Dorsolateral prefrontal cortex (tissue), 120 donors: ENCODE measurements at regions of chr1 and their contacts with region 1.

Region 1: DNA sequence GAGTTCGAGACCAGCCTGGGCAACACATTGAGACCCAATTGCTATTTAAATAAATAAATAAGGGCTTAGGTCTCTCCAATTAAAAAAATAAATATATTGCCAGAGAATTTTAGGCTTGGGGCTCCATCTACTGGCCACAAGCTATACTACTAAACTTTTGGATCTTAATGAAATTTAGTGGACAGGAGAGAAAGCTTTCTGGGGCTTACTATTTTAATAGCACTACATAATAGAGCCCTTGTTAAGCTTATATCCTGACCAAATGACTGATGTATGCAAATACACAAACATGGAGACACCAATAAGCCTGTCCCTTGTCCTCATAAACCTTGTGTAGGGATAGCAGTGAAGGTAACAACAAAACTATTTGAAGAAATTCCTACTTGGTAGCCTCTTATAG is 18.4 kb downstream of the CCT3 start:
- DNase-seq: no peak
- H3K4me3 ChIP-seq: no peak overlapping the region
- H3K27ac ChIP-seq: no peak overlapping the region
- H3K27me3 ChIP-seq: no peaks in the 10 kb centered on the region
- CTCF ChIP-seq: peak; percentile 30 to 72 (median 58)

Region 2: DNA sequence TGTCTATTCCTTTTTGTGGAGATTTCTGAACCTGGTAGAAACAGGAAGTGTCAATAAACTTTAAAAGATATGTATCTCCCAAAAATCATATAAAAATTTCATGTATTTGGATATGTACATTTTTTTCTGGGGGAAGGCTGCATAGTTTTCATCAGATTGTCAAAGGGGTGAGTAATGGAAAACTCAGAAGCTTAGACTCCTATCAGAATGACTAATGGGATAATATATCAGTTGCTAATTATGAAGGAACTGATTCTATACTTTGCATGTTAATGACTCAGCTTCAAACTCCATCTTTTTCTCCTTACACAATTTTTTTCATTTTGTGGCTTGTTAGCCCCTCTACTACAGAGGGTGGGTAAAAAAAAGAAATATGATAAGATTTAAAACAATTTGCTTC is 518.5 kb before region 1 on chr1:
- intact Hi-C with region 1: no loop called
- DNase-seq: no peak
- H3K4me3 ChIP-seq: no peak overlapping the region
- H3K27ac ChIP-seq: no peak overlapping the region
- H3K27me3 ChIP-seq: no peaks in the 10 kb centered on the region
- CTCF ChIP-seq: no peak

Region 3: DNA sequence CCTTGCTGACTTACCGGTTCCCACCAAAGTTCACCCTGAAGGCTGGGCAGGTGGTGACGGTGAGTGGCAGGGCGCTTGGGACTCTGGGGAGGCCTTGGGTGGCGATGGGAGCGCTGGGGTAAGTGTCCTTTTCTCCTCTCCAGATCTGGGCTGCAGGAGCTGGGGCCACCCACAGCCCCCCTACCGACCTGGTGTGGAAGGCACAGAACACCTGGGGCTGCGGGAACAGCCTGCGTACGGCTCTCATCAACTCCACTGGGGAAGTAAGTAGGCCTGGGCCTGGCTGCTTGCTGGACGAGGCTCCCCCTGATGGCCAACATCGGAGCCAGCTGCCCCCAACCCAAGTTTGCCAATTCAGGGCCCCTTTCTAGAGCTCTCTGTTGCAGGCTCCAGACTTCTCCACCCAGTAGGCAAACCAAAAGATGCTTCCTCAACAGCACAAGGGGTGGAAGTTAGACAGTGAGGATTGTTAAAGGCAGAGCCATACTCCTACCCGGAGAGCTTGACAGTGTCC is 182.6 kb before region 1 on chr1:
- intact Hi-C with region 1: loop called (anchors 5 to 10 kb)
- DNase-seq: no peak
- H3K4me3 ChIP-seq: no peak overlapping the region
- H3K27ac ChIP-seq: no peak overlapping the region
- H3K27me3 ChIP-seq: no peaks in the 10 kb centered on the region
- CTCF ChIP-seq: no peak

Region 4: GRCh38 chr1:156204686-156205085 is 115.0 kb before region 1 on chr1:
- intact Hi-C with region 1: loop called in 1 of 2 experiments (anchors 5 kb)
- DNase-seq: no peak
- H3K4me3 ChIP-seq: peak overlapping the region in 1 of 59 donors; percentile 5
- H3K27ac ChIP-seq: peak overlapping the region in 4 of 59 donors; percentile 8 to 36 (median 18)
- H3K27me3 ChIP-seq: no peaks in the 10 kb centered on the region
- CTCF ChIP-seq: no peak